ENCODE measurements at regions of chr14 and their contacts with region 1.

Region 1: GRCh38 chr14:74290415-74290814 is 12.3 kb downstream of the ABCD4 start:
- DNase-seq: peak; percentile 19

Region 2: GRCh38 chr14:74109369-74109768 is 181.0 kb before region 1 on chr14:
- in situ Hi-C with region 1: loop called (anchors 25 kb)
- DNase-seq: no peak